Activated T-helper 2 cell treated with anti-CD3 and anti-CD28 coated beads, Interferon-gamma antibody, Interleukin-2, Interleukin-4, amounts not matched to agents 10 μg/mL and 5 μg/mL and 100 μg/mL, durations not matched to agents 14 hours and 24 hours and 36 hours (primary cell): ENCODE measurements at regions of chr22 and their contacts with region 1.

Region 1: DNA sequence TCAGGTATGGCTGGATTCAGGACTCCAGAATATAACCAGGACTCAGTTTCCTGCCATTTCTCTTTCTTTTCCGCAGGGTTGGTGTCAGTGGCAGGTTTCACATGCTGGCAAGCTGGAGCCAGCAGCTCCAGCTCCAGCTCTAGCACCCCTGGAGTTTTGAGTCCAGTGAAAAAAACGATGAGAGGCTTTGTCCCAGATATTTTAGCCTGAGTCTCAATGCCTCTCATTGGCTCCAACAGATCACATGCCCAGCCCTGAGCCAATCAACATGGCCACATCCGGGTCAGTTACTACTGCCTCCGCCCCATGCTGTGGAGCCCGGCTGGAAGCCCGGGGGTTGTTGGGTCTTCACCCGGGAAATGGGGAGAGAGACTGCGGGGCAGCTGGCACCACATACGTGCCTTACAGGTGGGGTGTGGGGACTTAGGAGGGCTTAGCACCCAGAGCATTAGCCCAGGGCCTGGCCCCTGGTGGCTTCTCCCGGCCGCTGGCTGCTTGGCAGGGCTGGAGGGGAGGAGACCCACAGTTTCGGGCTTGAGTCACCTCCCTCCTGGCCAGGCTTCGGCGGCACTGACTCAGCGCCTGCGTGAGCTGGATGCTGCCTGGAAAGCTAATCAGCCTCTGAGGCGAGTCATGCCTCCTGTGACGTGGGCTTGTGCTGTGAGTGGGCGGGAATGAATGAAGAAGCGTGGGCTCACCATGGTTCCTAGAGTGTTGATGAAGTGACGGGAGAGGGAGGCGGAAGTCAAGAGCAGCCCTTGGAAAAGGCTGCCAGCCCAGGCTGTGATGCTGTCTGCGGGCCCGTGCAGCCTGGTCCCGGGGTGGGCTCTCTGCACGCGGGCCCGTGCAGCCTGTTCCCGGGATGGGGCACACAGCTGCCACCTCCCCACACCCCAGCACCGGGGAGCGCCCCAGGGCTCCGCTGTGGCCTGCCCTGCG is 15.3 kb upstream of the MRTFA start:
- DNase-seq: peak; percentile 70
- H3K4me3 Mint-ChIP-seq: peak overlapping the region; percentile 65
- H3K27ac Mint-ChIP-seq: peak overlapping the region; percentile 87
- H3K4me1 Mint-ChIP-seq: peaks cover 16% of the 10 kb centered on the region
- H3K27me3 Mint-ChIP-seq: no peaks in the 10 kb centered on the region

Region 2: DNA sequence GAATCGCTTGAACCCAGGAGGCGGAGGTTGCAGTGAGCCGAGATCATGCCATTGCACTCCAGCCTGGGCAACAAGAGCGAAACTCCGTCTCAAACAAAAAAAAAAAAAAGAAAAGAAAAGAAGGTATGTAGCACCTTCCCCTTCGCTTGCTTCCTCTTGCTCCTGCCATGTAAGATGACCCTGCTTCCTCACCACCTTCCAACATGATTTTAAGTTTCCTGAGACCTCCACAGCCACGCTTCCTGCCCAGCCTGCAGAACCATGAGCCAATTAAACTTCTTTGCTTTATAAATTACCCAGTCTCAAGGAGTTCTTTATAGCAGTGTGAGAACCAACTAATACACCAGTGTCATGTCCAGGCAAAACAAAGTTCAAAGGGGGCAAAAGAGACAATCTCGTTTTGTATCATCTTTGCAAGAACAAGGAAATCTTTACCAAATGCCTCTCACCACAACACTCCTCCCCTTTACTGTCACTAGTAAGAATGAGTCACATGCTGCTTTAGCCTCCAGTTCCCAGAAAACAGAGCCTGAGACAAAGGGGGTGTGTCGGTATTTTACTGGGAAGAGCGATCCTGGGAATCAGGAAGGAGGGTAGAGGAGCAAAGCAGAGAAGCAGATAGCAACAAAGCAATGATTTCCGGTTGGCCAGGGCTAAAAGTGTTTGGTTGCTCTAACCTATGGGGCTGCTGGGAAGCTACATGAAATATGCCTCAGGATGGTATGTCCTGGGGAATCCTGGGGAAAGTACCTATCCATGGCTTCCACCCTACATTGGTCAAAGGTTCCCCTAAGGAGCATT is 17.0 kb after region 1 on chr22:
- intact Hi-C with region 1: loop called (anchors 2 kb)
- DNase-seq: no peak
- H3K4me3 Mint-ChIP-seq: no peak overlapping the region
- H3K27ac Mint-ChIP-seq: peak overlapping the region; percentile 88
- H3K4me1 Mint-ChIP-seq: peaks cover 18% of the 10 kb centered on the region
- H3K27me3 Mint-ChIP-seq: no peaks in the 10 kb centered on the region